ENCODE measurements at regions of chr1 and their contacts with region 1.

Region 1: DNA sequence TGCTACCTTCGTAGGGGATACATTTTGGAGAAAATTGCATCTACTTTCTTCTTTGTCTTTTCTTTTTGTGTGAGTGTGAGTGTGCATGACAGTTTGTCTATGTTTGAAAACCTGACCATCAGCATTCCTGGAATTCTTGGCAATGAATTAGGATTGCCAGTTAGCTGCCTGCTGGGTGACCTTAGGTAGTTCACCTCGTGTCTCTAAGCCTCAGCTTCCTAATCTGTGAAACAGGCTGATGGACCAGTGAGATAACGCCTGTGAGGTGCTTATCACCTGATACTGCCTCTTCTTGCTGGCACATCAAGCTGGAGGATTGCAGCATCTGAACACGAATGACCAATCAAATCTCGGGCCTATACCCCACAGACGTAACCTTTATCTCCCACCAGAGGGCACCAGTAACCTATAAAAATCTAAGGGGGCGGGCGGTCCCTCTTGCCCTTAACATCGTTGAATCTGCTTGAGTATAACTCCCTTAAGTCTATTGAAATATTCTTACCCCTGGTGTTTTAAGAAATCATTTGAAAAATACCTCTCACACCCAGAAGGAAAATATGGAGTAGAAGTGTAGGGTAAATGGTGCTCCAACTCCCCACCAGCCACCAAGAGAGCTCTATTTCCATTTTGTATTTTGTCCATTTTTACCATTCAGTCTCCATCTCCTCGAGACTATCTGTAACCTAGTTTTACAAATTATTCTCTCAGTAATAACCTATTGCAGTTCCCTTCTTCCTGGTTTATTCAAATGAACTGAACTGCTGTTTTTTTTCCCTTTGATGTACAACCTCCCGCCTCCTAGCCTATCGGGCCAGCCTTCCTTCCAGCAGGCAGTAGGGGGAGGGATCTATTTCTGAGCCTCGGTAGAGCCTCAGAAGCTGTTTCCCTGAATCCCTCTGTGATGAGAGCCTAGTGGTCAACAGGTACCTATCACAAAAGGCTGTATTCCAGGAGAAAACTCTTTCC is 49.7 kb downstream of the MDM4 start:
- DNase-seq: no peak
- H3K4me3 ChIP-seq: no peak overlapping the region
- H3K27ac ChIP-seq: peak overlapping the region in 3 of 8 donors; percentile 53 to 72 (median 66)
- H3K4me1 ChIP-seq: peaks cover 11 to 38% (median 18%) of the 10 kb centered on the region in 6 donors
- H3K27me3 ChIP-seq: no peaks in the 10 kb centered on the region
- CTCF ChIP-seq: peak; percentile 64 to 86 (median 79)
- POLR2A ChIP-seq: no peak

Region 2: GRCh38 chr1:204763706-204764427 is 198.0 kb after region 1 on chr1:
- intact Hi-C with region 1: loop called (anchors 5 kb)
- DNase-seq: peak; percentile 91
- H3K4me3 ChIP-seq: no peak overlapping the region
- H3K27ac ChIP-seq: no peak overlapping the region
- H3K4me1 ChIP-seq: peaks cover 5 to 12% (median 10%) of the 10 kb centered on the region in 6 donors
- H3K27me3 ChIP-seq: peaks cover 0 to 45% (median 0%) of the 10 kb centered on the region in 7 donors
- CTCF ChIP-seq: peak; percentile 52 to 87 (median 78)
- POLR2A ChIP-seq: no peak

Region 3: DNA sequence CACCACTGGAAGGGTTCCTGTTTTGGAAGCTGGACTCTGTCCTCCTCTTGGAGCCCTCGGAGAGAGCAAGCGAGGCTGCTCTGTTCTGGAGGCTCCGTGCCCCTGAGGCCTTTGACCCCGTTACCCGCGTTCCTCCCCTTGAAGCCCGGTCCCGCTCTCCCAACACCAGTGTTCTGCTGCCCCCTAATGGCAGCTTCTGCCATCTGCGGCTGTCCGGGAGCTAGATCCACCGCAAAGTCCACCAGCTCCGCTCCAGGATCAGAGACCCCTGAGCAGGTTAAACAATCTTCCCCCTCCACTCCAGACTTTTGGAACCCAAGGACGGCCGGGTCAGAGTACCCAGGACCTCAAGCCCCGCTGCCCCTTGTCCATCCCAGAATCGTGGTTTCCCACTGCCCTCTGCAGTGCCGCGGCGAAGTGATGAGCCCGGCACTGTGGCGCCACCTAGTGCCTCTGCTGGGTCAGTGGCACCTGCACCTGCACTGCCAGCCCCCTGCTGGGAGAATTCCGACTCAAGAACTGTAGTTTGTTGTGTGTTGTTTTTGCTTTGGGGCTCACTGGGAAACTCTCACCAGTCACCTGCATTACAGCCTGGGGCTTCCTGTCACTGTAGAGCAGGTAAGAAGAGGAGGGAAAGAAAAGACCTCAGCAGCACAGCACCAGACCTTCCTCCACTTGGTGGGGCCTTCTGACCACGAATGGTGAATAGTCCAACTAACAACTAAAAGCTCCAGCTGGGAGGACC is 241.2 kb after region 1 on chr1:
- intact Hi-C with region 1: loop called (anchors 5 kb)
- DNase-seq: peak; percentile 93
- H3K4me3 ChIP-seq: peak overlapping the region; percentile 22 to 66 (median 47)
- H3K27ac ChIP-seq: peak overlapping the region in 1 of 8 donors; percentile 26
- H3K4me1 ChIP-seq: peaks cover 0 to 22% (median 10%) of the 10 kb centered on the region in 6 donors
- H3K27me3 ChIP-seq: no peaks in the 10 kb centered on the region
- CTCF ChIP-seq: peak; percentile 89 to 99 (median 97)
- POLR2A ChIP-seq: no peak